ENCODE measurements at regions of chr1 and their contacts with region 1.

Region 1: DNA sequence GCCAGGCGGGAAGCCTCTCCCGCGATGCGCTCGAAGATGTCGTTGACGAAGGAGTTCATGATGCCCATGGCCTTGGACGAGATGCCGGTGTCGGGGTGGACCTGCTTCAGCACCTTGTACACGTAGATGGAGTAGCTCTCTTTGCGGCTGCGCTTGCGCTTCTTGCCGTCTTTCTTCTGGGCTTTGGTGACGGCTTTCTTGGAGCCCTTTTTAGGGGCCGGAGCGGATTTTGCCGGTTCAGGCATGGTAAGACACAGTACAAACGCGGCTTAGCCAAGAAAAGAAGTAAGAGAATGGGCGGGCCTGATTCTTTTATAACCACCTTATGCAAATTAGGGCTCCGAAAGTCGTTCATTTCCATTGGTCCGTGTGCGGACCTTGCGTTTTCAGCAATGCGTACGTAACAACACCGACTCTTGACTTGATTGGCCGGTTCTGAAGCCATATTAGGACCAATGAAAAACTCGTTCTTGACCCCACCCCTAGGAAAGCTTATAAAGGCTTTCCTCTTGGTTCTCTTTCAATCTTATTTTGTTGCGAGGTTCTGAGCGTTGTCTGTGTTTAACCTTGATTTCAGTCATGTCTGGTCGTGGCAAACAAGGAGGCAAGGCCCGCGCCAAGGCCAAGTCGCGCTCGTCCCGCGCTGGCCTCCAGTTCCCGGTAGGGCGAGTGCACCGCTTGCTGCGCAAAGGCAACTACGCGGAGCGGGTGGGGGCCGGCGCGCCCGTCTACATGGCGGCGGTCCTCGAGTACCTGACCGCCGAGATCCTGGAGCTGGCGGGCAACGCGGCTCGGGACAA is 12.8 kb upstream of the BOLA1 start:
- DNase-seq: peak; percentile 100
- H3K4me3 Mint-ChIP-seq: no peak overlapping the region
- H3K27ac Mint-ChIP-seq: no peak overlapping the region
- H3K4me1 Mint-ChIP-seq: no peaks in the 10 kb centered on the region
- H3K27me3 Mint-ChIP-seq: no peaks in the 10 kb centered on the region
- CTCF ChIP-seq: no peak

Region 2: GRCh38 chr1:149899460-149900293 is 13.1 kb after region 1 on chr1 and contains the start of gene BOLA1:
- CTCF ChIA-PET with region 1: interaction called, 4 read pairs
- POLR2A ChIA-PET with region 1: interaction called, 92 read pairs
- intact Hi-C with region 1: no loop called
- DNase-seq: peak; percentile 97
- H3K4me3 Mint-ChIP-seq: peak within 1 kb of the TSS; percentile 80
- H3K27ac Mint-ChIP-seq: peak within 1 kb of the TSS; percentile 12
- H3K4me1 Mint-ChIP-seq: peaks cover 16% of the 10 kb centered on the region
- H3K27me3 Mint-ChIP-seq: no peaks in the 10 kb centered on the region
- CTCF ChIP-seq: no peak
- total RNA-seq, gene BOLA1: 17.4 and 22.4 TPM in 2 replicates

Region 3: DNA sequence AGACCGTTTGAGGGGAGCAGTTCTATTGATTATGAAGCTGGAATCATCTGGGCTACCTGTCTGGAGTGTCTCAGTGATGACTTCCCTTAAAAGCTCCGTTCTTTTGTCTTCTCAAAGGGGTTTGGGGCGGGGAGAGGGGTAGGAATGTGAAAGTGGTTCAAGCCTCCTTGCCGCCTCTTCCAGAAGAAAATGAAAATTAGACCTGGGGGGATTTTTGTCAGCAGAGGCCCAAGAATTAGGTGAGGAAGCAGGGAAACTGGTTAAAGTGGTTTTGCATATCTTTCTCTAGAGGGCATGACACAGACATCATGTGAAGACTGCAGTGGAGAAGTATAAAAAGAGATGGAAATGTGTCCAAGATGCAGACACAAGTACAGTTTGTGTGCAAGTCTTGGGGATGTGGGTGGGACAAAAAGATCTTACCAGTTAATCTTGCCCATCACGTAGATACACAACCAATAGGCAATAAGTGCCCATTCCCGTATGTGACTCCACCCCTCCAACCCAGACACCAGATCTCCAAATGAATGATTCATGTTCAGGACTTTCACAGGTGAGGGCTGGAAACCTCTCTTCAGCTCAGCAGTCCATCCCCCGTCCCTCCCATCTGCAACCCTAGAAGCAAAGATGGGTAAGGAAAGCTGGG is 50.6 kb after region 1 on chr1:
- CTCF ChIA-PET with region 1: interaction called, 5 read pairs
- POLR2A ChIA-PET with region 1: interaction called, 273 read pairs
- intact Hi-C with region 1: loop called (anchors 1 kb)
- DNase-seq: peak; percentile 96
- H3K4me3 Mint-ChIP-seq: peak overlapping the region; percentile 91
- H3K27ac Mint-ChIP-seq: peak overlapping the region; percentile 93
- H3K4me1 Mint-ChIP-seq: peaks cover 48% of the 10 kb centered on the region
- H3K27me3 Mint-ChIP-seq: no peaks in the 10 kb centered on the region
- CTCF ChIP-seq: peak; percentile 23

Region 4: GRCh38 chr1:149997585-149998262 is 111.1 kb after region 1 on chr1:
- CTCF ChIA-PET with region 1: interaction called, 3 read pairs
- POLR2A ChIA-PET with region 1: interaction called, 60 read pairs
- intact Hi-C with region 1: no loop called
- DNase-seq: no peak
- H3K4me3 Mint-ChIP-seq: no peak overlapping the region
- H3K27ac Mint-ChIP-seq: no peak overlapping the region
- H3K4me1 Mint-ChIP-seq: peaks cover 43% of the 10 kb centered on the region
- H3K27me3 Mint-ChIP-seq: no peaks in the 10 kb centered on the region
- CTCF ChIP-seq: no peak

Region 5: GRCh38 chr1:150053926-150054325 is 167.3 kb after region 1 on chr1:
- CTCF ChIA-PET with region 1: interaction called, 7 read pairs
- POLR2A ChIA-PET with region 1: interaction called, 43 read pairs
- intact Hi-C with region 1: loop called (anchors 1 kb)
- DNase-seq: no peak
- H3K4me3 Mint-ChIP-seq: no peak overlapping the region
- H3K27ac Mint-ChIP-seq: no peak overlapping the region
- H3K4me1 Mint-ChIP-seq: peaks cover 7% of the 10 kb centered on the region
- H3K27me3 Mint-ChIP-seq: no peaks in the 10 kb centered on the region
- CTCF ChIP-seq: no peak

Region 6: GRCh38 chr1:150186789-150187559 is 300.4 kb after region 1 on chr1:
- CTCF ChIA-PET with region 1: interaction called, 8 read pairs
- POLR2A ChIA-PET with region 1: interaction called, 52 read pairs
- intact Hi-C with region 1: loop called (anchors 2 kb)
- DNase-seq: peak; percentile 74
- H3K4me3 Mint-ChIP-seq: no peak overlapping the region
- H3K27ac Mint-ChIP-seq: no peak overlapping the region
- H3K4me1 Mint-ChIP-seq: peaks cover 9% of the 10 kb centered on the region
- H3K27me3 Mint-ChIP-seq: no peaks in the 10 kb centered on the region
- CTCF ChIP-seq: peak; percentile 67

Measured in MCF 10A (cell line).